OCI-LY7 (cell line): ENCODE measurements at regions of chrX and their contacts with region 1.

Region 1: DNA sequence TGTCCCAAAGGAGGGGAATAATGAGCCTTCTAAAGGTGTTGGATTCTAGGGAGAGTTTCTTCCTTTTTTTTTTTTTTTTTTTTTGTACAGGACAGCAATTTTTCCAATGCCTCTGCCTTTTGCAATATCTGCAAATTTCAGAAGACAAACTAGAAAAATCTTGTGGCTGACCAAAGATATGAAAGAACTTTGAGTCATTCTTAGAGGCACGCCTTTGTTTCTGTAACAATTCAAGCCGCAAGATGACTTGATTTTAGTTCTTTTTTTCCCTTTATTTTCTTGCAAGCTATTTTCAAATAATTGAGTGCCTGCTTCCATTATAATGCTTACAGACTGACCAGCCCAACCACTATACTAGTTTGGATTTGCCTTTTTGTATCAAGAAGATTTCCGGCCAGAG is 47.6 kb upstream of the UXT start:
- DNase-seq: no peak
- H3K4me3 ChIP-seq: no peak overlapping the region
- H3K27ac ChIP-seq: no peak overlapping the region
- H3K4me1 ChIP-seq: no peaks in the 10 kb centered on the region
- CTCF ChIP-seq: no peak

Region 2: GRCh38 chrX:47568656-47569295 is 137.8 kb before region 1 on chrX:
- CTCF ChIA-PET with region 1: no interaction called
- POLR2A ChIA-PET with region 1: no interaction called
- intact Hi-C with region 1: no loop called
- DNase-seq: peak; percentile 50
- H3K4me3 ChIP-seq: no peak overlapping the region
- H3K27ac ChIP-seq: no peak overlapping the region
- H3K4me1 ChIP-seq: no peaks in the 10 kb centered on the region
- CTCF ChIP-seq: peak; percentile 60

Region 3: GRCh38 chrX:47723689-47724088 is 17.1 kb after region 1 on chrX:
- CTCF ChIA-PET with region 1: no interaction called
- POLR2A ChIA-PET with region 1: interaction called, 10 read pairs
- intact Hi-C with region 1: no loop called
- DNase-seq: no peak
- H3K4me3 ChIP-seq: no peak overlapping the region
- H3K27ac ChIP-seq: no peak overlapping the region
- H3K4me1 ChIP-seq: no peaks in the 10 kb centered on the region
- CTCF ChIP-seq: 0 out of 2 replicates have a peak, but pooled peaks have one; percentile 22